GM10248 (cell line): ENCODE measurements at regions of chr6 and their contacts with region 1.

Region 1: GRCh38 chr6:169831450-169832246 is 80.2 kb downstream of the ERMARD start:
- DNase-seq: peak; percentile 80
- CTCF ChIP-seq: peak; percentile 94

Region 2: DNA sequence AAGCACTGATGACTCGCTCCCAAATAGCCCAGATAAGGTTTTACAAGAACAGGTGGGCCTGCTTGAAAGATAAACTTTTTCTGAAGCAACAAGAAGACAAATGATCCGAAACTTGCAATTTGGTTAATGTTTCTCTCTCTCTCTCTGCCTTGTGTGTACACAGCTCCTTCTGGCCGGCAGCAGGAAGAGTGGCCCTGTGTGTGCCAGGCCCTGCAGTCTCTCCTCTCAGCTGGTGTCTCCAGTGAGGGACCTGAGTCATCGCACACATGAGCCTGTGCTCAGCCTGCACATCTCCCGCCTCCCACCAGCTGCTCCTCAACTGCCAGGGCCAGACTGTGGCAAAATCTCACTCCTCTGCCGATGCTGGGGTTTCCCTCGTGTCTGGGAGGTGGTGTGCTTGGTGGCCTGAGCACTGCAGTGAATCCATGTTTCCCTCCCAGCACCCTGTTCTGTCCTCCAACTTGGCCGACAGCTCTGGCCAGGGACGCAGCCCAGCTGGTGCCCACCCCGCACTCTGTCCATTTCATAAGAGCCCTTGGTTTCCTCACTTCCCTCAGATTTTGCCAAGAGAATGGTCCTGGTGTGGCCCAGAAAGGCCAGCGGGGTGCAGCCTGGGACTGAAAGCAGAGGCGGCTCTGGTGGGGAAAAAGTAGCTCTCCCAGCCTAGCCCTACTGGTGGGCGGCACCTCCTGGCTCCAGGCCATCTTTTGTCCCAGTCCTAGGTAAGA is 30.8 kb before region 1 on chr6:
- CTCF ChIA-PET with region 1: interaction called, 47 read pairs
- POLR2A ChIA-PET with region 1: no interaction called
- DNase-seq: no peak
- CTCF ChIP-seq: no peak

Region 3: DNA sequence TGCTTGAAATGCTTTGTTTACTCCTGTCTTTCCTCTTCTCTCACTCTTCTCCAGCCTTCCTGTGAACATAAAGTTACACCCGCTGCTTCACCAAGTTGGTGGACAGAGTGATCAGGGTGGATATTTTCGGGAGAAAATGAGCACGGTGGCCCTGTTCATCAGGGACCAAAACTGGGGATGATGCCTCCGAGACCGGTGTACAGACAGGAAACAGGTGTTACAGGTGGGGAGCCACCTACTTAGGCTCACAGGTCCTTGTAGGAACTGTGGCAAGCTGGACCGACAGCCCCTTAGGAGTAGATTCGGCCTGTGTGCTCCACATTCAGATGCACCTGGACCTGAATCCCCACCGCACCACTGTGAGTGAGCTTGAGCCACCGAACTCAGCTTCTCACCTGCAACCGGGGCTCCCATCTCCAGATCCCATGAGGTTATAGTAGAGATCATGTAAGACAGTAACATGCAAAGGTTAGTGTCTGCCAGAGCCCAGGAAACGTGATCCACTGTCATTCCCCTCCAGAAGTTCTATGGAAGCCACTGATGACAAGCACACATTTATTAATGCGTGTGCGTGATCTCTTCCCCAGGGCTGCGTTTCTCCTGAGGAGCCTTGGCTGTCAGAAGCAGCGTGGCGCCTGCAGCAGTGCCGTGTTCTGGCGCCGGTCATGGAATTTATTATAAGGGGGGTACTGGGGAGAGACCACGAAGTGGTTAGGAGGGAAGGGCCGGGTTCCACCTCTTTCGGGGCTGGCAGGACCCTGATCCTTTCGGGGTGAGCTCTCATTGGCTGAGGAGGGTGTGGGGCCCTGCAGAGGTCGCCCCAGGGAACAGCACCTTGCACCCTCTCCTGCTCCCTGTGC is 14.0 kb after region 1 on chr6:
- CTCF ChIA-PET with region 1: interaction called, 28 read pairs
- POLR2A ChIA-PET with region 1: no interaction called
- DNase-seq: no peak
- CTCF ChIP-seq: no peak

Region 4: DNA sequence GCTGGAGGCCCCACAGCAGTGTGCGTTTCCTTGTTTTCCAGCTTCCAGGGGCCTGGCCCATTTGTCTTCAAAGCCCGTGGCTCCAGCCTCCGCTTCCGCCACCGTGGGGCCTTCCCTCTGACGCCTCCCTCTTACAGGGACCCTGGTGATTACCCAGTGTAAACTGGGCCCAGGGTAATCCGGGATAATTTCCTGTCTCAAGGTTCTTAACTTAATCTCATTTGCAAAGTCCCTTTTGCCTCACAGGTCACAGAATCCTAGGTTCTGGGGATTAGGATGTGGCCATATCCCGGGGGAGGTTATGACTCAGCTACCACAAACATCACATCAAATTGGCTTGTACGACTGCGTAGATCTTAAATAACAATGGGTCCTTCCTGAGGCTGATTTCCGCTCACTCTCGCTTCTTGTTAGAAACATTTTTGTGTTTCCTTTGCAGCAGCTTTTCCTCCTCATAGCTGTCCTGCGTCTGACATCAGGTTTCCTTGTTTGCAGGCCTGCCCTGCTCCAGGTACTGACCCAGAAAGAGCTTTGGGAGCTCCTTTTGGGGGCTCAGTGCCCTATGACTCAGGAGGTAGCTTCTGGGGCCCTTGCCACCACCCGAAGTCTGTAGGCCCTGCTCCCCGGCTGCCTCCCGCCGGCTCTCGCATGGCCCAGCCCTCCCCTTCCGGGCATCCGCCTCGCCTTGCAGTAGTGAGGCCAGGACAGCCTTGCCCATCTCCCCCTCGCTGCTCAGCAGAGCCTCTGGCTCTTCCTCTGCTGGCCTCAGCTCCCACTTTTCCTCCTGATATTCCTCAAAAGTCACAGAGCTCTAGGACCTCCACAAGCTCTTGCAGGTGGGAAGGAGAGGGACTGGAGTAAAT is 20.2 kb after region 1 on chr6:
- CTCF ChIA-PET with region 1: interaction called, 19 read pairs
- POLR2A ChIA-PET with region 1: no interaction called
- DNase-seq: no peak
- CTCF ChIP-seq: no peak

Region 5: GRCh38 chr6:170260723-170261122 is 429.1 kb after region 1 on chr6:
- CTCF ChIA-PET with region 1: no interaction called
- POLR2A ChIA-PET with region 1: no interaction called
- DNase-seq: no peak
- CTCF ChIP-seq: no peak

Region 6: DNA sequence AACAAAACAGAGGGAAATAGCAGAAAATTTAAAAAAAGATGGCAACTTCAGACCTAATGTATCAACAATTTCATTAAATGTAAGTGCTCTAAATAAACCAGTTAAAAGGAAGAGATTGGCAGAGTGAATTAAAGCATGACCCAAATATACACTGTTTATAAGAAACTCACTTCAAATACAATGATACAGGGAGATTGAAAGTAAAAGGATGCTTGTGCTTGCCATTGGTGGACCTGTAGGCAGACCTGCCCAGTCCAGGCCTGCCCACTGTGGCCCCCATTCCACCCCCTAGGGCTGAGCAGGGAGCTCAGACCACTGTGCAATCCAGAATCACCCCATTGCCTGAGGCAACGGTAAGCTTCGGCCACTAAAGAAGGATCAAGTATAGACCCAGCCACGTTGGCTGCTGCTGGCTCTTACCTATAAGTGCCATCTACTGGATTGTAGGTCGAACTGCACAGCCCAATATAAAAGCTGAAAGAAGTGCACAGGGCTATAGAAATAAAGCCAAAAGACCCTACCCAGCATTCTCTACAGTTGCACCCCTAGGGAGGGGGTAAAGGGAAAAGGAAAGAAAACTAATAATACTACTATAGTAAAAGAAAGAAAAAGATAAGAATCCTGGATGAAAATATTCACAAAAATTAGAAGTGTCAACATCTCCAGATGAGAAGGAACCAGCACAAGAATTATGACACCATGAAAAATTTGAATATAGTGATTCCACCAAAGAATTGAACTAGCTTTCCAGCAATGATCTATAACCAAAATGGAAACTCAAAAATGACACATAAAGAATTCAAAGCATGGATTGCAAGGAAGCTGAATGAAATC is 685.4 kb after region 1 on chr6:
- CTCF ChIA-PET with region 1: interaction called, 38 read pairs
- POLR2A ChIA-PET with region 1: no interaction called
- DNase-seq: peak; percentile 39
- CTCF ChIP-seq: peak; percentile 74

Region 7: DNA sequence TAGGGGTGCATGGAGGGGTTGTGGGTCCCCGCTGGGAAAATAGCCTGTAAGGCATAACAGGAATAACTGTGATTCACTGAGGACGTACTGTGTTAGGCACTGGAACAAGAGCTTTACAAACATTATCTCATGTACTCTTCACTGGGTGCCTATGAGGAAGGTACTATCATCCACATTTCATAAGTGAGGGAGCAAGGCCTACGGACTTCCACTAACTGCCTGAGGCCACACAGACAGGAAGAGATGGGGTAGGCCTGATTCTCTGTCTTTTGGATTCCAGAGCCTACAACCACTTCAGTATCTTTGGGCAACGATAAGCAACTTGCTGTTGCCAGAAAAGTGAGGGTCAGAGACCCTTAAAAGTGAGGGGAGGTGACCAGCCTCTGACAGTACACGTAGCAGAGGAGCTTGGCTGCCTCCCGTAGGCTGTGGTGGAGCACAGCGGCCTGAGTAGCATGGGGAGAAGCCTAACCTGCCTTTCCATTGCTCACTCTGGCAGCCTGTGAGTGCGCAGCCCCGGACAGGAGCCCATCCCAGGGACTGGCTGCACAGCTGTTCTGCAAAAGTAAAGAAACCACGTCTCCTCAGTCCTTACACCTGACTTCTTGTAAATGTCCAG is 691.0 kb after region 1 on chr6:
- CTCF ChIA-PET with region 1: interaction called, 105 read pairs
- POLR2A ChIA-PET with region 1: no interaction called
- DNase-seq: peak; percentile 20
- CTCF ChIP-seq: peak; percentile 43

Region 8: DNA sequence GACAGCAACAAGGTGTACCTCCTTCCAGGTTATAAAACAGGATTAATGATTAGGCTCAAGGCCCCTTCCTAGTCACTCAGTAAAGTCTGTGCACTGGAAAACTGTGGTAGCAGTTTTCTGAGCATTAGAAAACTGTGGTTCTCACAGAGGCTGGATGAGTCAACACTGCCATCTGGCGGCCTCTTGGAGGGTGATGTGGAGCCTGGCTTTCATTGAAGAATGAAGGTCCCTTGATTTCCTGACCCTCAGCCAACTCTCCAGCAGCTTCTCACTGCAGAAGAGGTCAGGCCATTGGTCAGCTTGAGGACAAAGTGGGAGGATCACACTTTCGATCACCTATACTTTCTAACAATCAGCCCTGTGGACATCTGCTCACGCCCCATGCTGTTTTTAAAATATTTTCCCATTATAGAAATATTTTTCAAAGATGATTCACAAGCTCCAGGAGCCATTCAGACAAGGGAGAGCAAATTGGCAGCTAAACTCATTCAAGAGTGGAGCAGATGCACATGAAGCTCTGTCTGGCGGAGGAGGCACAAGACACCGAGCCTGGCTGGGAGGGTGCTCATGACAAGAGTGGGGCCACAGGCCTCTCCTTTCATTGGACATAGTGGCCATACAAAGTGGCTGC is 698.3 kb after region 1 on chr6:
- CTCF ChIA-PET with region 1: interaction called, 105 read pairs
- POLR2A ChIA-PET with region 1: no interaction called
- DNase-seq: peak; percentile 70
- CTCF ChIP-seq: peak; percentile 84